A549 (cell line): ENCODE measurements at regions of chr13 and their contacts with region 1.

Region 1: DNA sequence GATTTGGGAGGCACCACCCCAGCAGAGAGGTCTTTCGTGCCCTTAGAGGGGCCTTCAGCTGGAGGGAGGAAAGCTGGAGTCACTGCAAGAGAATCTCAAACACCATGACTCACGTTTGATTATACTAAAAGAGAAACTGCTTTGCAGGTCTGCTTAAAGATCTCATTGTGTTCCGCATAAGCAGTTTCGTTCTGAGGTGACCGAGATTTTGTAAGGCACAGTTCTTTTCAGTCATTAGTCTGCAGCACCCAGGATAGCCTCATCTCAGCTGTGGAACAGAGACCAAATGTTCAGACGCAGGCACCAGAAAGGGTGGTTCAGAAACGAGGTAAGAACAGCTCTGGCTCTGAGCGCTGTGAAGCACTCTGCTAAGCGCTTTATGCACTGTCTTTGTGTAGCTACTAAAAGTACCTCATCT is 71.2 kb upstream of the GTF3A start:
- DNase-seq: no peak
- ATAC-seq: peak; percentile 30 to 36; a peak in 4 of 6 replicates
- H3K4me3 ChIP-seq: no peak overlapping the region
- H3K27ac ChIP-seq: peak overlapping the region in 1 of 2 experiments; percentile 57; a peak in 2 of 6 replicates
- H3K4me1 ChIP-seq: no peaks in the 10 kb centered on the region
- CTCF ChIP-seq: no peak
- EP300 ChIP-seq: no peak
- POLR2A ChIP-seq: no peak
- RAD21 ChIP-seq: no peak

Region 2: GRCh38 chr13:27339299-27339698 is 13.9 kb before region 1 on chr13:
- CTCF ChIA-PET with region 1: interaction called, 13 read pairs
- POLR2A ChIA-PET with region 1: no interaction called
- DNase-seq: peak; percentile 37 to 73
- ATAC-seq: peak; percentile 80 to 94
- H3K4me3 ChIP-seq: no peak overlapping the region
- H3K27ac ChIP-seq: no peak overlapping the region
- H3K4me1 ChIP-seq: peaks cover 11% of the 10 kb centered on the region; the same call in 1 of the 3 replicates
- CTCF ChIP-seq: peak; percentile 39; the same call in 2 of the 3 replicates
- EP300 ChIP-seq: no peak
- POLR2A ChIP-seq: no peak
- RAD21 ChIP-seq: peak in 1 of 2 experiments; percentile 42; a peak in 2 of 5 replicates

Region 3: GRCh38 chr13:27415116-27415515 is 61.9 kb after region 1 on chr13:
- CTCF ChIA-PET with region 1: no interaction called
- POLR2A ChIA-PET with region 1: no interaction called
- DNase-seq: no peak
- ATAC-seq: no peak
- H3K4me3 ChIP-seq: no peak overlapping the region
- H3K27ac ChIP-seq: no peak overlapping the region
- H3K4me1 ChIP-seq: no peaks in the 10 kb centered on the region
- CTCF ChIP-seq: no peak
- EP300 ChIP-seq: no peak
- POLR2A ChIP-seq: no peak
- RAD21 ChIP-seq: no peak